HEK293T (cell line): ENCODE measurements at regions of chr17 and their contacts with region 1.

Region 1: GRCh38 chr17:43367737-43368242 is 31.0 kb upstream of the ARL4D start:
- DNase-seq: peak; percentile 60

Region 2: GRCh38 chr17:43125133-43125966 is 242.4 kb before region 1 on chr17 and contains the start of gene BRCA1:
- CTCF ChIA-PET with region 1: no interaction called
- POLR2A ChIA-PET with region 1: interaction called, 16 read pairs
- DNase-seq: peak; percentile 97

Region 3: DNA sequence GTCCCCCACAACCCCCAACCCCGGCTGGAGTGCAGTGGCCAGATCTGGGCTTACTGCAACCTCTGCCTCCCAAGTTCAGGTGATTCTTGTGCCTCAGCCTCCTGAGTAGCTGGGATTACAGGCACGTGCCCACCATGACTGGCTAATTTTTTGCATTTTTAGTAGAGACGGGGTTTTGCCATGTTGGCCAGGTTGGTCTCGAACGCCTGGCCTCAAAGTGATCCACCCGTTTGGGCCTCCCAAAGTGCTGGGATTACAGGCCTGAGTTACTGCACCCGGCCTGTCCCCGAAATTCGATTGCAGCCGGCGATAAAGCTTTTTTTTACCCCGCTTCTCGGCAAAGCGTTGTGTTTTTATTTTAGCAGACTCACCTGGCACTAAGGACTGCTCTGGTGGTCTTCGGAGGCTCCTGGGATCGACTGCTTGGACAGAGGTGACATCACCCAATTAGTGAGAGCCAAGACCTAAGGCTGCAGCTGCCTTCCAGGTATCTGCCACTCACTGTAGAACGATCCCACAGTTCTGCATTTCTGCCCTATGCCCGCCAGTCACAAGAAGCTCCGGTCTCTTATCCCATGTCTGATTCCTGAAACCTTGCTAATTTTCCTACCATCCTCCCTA is 51.2 kb before region 1 on chr17:
- CTCF ChIA-PET with region 1: interaction called, 3 read pairs
- POLR2A ChIA-PET with region 1: interaction called, 98 read pairs
- DNase-seq: no peak

Region 4: DNA sequence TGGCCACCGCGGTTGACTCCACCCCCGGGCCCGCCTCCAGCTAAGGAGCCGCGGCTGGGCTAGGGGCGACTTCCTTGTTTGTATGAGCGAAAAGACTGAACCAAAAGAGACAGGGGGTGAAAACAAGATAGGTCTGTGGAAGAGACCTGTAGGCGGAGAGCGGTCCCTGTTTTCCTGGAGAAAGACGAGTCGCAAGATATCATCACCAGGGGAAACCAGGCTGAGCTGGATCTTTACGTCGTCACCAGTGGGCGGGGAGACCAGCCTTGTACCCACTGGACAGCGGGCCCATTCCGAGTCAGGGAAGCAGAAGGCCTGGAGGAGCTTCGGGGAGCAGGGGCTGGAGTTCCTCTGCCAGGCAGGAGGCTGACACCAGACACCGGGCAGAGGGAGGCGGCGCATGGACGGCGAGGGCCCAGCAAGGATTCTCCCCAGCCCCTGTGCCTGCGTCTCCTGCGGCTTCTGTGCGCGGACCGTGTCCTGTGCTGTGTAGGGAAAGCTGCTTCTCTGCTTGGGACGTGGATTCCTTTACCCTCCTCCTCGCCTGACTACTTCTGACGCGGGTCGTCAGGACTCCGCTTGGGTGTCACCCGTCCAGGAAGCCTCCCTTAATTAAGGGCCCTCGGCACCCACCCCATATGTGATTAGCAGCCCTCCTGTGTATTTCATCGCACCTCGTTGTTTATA is 20.7 kb after region 1 on chr17:
- CTCF ChIA-PET with region 1: interaction called, 11 read pairs
- POLR2A ChIA-PET with region 1: interaction called, 244 read pairs
- DNase-seq: peak; percentile 82

Region 5: GRCh38 chr17:43434902-43435319 is 67.1 kb after region 1 on chr17:
- CTCF ChIA-PET with region 1: no interaction called
- POLR2A ChIA-PET with region 1: interaction called, 10 read pairs
- DNase-seq: no peak

Region 6: GRCh38 chr17:43477832-43478634 is 110.2 kb after region 1 on chr17:
- CTCF ChIA-PET with region 1: interaction called, 19 read pairs
- POLR2A ChIA-PET with region 1: interaction called, 117 read pairs
- DNase-seq: no peak